ENCODE measurements at regions of chr12 and their contacts with region 1.

Region 1: GRCh38 chr12:84874125-84874824 is 38.3 kb downstream of the SLC6A15 start:
- DNase-seq: no peak
- ATAC-seq: peak; percentile 90
- H3K4me3 ChIP-seq: no peak overlapping the region
- H3K27ac ChIP-seq: no peak overlapping the region
- H3K4me1 ChIP-seq: no peaks in the 10 kb centered on the region
- H3K27me3 ChIP-seq: no peaks in the 10 kb centered on the region
- CTCF ChIP-seq: peak; percentile 39 to 73 (median 58); a peak in 5 of 6 replicates
- EP300 ChIP-seq: no peak
- POLR2A ChIP-seq: no peak
- RAD21 ChIP-seq: peak; percentile 82

Region 2: DNA sequence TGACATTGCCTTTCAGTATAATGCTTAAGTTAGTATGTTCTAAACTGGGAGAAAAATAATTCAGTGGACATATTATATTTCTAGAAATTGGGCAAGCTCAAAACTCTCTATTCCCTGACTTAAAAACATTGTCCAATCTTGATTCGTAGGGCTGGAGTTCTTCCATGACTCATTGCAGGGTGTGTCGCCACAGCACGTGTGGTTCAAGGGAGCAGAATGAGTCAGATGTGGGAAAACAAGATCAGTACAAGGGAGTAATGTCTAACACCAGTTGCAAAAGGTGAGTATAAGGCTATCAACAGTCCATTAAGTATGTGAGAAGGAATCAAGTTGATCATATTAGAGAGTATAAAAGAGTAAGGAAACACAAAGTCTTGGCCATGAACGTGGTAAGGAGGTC is 1300.6 kb before region 1 on chr12:
- CTCF ChIA-PET with region 1: no interaction called
- POLR2A ChIA-PET with region 1: no interaction called
- RAD21 ChIA-PET with region 1: no interaction called
- SMC1A ChIA-PET with region 1: no interaction called
- in situ Hi-C with region 1: no loop called
- intact Hi-C with region 1: no loop called
- DNase-seq: no peak
- ATAC-seq: no peak
- H3K4me3 ChIP-seq: no peak overlapping the region
- H3K27ac ChIP-seq: no peak overlapping the region
- H3K4me1 ChIP-seq: no peaks in the 10 kb centered on the region
- H3K27me3 ChIP-seq: no peaks in the 10 kb centered on the region
- CTCF ChIP-seq: no peak
- EP300 ChIP-seq: no peak
- POLR2A ChIP-seq: no peak
- RAD21 ChIP-seq: no peak

Region 3: GRCh38 chr12:84862186-84862585 is 12.1 kb before region 1 on chr12:
- CTCF ChIA-PET with region 1: interaction called, 13 read pairs
- POLR2A ChIA-PET with region 1: no interaction called
- RAD21 ChIA-PET with region 1: interaction called, 3 read pairs
- SMC1A ChIA-PET with region 1: interaction called, 5 read pairs
- in situ Hi-C with region 1: no loop called
- intact Hi-C with region 1: no loop called
- DNase-seq: no peak
- ATAC-seq: no peak
- H3K4me3 ChIP-seq: no peak overlapping the region
- H3K27ac ChIP-seq: no peak overlapping the region
- H3K4me1 ChIP-seq: no peaks in the 10 kb centered on the region
- H3K27me3 ChIP-seq: no peaks in the 10 kb centered on the region
- CTCF ChIP-seq: no peak
- EP300 ChIP-seq: no peak
- POLR2A ChIP-seq: no peak
- RAD21 ChIP-seq: no peak

Region 4: GRCh38 chr12:85029456-85029855 is 155.2 kb after region 1 on chr12:
- CTCF ChIA-PET with region 1: interaction called, 203 read pairs
- POLR2A ChIA-PET with region 1: no interaction called
- RAD21 ChIA-PET with region 1: interaction called, 56 read pairs
- SMC1A ChIA-PET with region 1: interaction called, 60 read pairs
- in situ Hi-C with region 1: loop called (anchors 5 kb)
- intact Hi-C with region 1: loop called (anchors 1 kb)
- DNase-seq: no peak
- ATAC-seq: 0 out of 3 replicates have a peak, but pooled peaks have one; percentile 34
- H3K4me3 ChIP-seq: no peak overlapping the region
- H3K27ac ChIP-seq: no peak overlapping the region
- H3K4me1 ChIP-seq: no peaks in the 10 kb centered on the region
- H3K27me3 ChIP-seq: no peaks in the 10 kb centered on the region
- CTCF ChIP-seq: peak in 2 of 3 experiments; percentile 20 to 44; a peak in 2 of 6 replicates
- EP300 ChIP-seq: no peak
- POLR2A ChIP-seq: no peak
- RAD21 ChIP-seq: peak; percentile 44

Region 5: GRCh38 chr12:85036241-85036707 is 162.0 kb after region 1 on chr12 and contains the starts of genes LRRIQ1 and TSPAN19:
- CTCF ChIA-PET with region 1: interaction called, 203 read pairs
- POLR2A ChIA-PET with region 1: no interaction called
- RAD21 ChIA-PET with region 1: interaction called, 56 read pairs
- SMC1A ChIA-PET with region 1: interaction called, 8 read pairs
- in situ Hi-C with region 1: no loop called
- intact Hi-C with region 1: no loop called
- DNase-seq: peak; percentile 27
- ATAC-seq: peak; percentile 92
- H3K4me3 ChIP-seq: peak within 1 kb of the TSS; percentile 70
- H3K27ac ChIP-seq: no peak within 1 kb of the TSS
- H3K4me1 ChIP-seq: no peaks in the 10 kb centered on the region
- H3K27me3 ChIP-seq: no peaks in the 10 kb centered on the region
- CTCF ChIP-seq: no peak
- EP300 ChIP-seq: no peak
- POLR2A ChIP-seq: no peak
- RAD21 ChIP-seq: no peak
- polyA plus RNA-seq, gene LRRIQ1: not detected
- polyA plus RNA-seq, gene TSPAN19: not detected

Region 6: GRCh38 chr12:85057370-85057963 is 183.2 kb after region 1 on chr12:
- CTCF ChIA-PET with region 1: interaction called, 67 read pairs
- POLR2A ChIA-PET with region 1: no interaction called
- RAD21 ChIA-PET with region 1: interaction called, 7 read pairs
- SMC1A ChIA-PET with region 1: interaction called, 26 read pairs
- in situ Hi-C with region 1: no loop called
- intact Hi-C with region 1: loop called (anchors 1 kb)
- DNase-seq: no peak
- ATAC-seq: peak; percentile 70
- H3K4me3 ChIP-seq: no peak overlapping the region
- H3K27ac ChIP-seq: no peak overlapping the region
- H3K4me1 ChIP-seq: no peaks in the 10 kb centered on the region
- H3K27me3 ChIP-seq: no peaks in the 10 kb centered on the region
- CTCF ChIP-seq: peak; percentile 62 to 74 (median 73); a peak in 5 of 6 replicates
- EP300 ChIP-seq: no peak
- POLR2A ChIP-seq: no peak
- RAD21 ChIP-seq: peak; percentile 54

Region 7: DNA sequence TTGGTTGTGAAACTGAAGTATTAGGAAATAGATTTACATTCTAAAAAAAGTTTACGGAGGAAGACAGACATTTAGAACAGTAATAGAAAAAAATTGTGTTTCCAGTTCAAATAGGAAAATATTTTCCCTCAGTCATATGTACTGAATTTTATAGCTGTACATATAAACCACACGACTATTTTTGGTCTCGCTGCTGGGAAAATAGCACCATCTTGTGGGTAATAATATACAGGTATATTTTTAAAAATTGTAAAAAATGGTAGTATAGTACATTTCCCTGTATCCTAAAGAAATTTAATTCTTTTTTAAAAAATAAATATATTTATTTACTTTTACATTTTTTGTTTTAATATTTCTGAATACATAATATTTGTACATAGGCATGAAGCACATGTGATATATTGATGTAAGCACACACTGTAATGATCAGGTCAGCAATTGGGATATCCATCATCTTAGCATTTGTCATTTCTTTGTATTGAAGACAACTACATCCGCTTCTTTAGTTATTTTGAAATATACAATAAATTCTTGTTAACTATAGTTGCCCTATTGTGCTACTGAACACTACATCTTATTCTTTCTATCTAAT is 574.4 kb after region 1 on chr12:
- CTCF ChIA-PET with region 1: no interaction called
- POLR2A ChIA-PET with region 1: no interaction called
- RAD21 ChIA-PET with region 1: no interaction called
- SMC1A ChIA-PET with region 1: interaction called, 3 read pairs
- in situ Hi-C with region 1: no loop called
- intact Hi-C with region 1: loop called (anchors 5 kb)
- DNase-seq: no peak
- ATAC-seq: peak; percentile 58
- H3K4me3 ChIP-seq: no peak overlapping the region
- H3K27ac ChIP-seq: no peak overlapping the region
- H3K4me1 ChIP-seq: no peaks in the 10 kb centered on the region
- H3K27me3 ChIP-seq: peaks cover 0 to 3% of the 10 kb centered on the region in 2 experiments; a peak in 1 of 4 replicates
- CTCF ChIP-seq: peak in 2 of 3 experiments; percentile 18 to 24; a peak in 3 of 6 replicates
- EP300 ChIP-seq: no peak
- POLR2A ChIP-seq: no peak
- RAD21 ChIP-seq: peak; percentile 66

Measured in GM12878 (cell line).